ENCODE measurements at regions of chr5 and their contacts with region 1.

Region 1: DNA sequence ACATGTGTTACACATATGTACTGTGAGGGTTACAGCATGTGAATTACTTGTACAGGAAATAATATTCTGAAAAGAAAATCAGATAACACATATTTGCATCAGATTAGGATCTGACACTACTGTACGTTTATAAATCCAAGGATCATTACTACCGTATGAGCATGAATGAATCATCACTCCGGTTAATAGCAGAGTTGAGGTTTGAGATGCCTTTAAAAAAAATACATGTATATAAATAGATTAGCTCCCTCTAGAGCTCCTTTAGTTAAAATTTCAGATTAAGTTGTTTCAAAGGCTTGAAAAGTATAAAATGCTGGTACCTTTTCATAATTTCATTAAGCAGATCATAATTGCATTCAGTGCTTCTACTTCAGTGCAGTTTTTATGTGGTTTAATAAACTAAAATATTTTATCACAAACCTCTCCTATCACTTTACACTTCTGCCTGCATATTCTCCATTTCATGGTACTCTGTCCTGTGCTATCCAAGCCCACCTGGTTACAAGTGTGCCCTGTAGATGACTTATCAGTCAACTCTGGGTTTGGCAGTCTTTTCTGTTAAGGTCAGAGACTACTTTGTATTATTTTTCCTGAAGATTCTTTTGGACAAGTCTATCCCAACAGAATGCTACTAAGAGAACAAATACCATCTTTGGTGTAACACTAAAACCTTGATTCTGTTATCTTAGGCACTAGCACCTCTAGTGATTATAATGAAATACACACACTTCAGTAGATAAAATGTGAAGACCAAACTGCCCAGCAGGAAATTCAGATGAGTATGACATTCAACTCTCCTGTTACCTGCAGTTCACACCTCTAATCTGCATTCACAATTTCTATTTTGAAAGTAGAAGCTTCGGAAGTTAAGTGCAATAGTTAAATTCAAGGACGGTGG is 48.0 kb upstream of the POU5F2 start:
- DNase-seq: no peak
- H3K4me3 ChIP-seq: no peak overlapping the region
- H3K27ac ChIP-seq: no peak overlapping the region
- H3K4me1 ChIP-seq: peaks cover 0 to 4% (median 0%) of the 10 kb centered on the region in 4 donors
- H3K27me3 ChIP-seq: no peaks in the 10 kb centered on the region
- CTCF ChIP-seq: no peak
- EP300 ChIP-seq: no peak
- POLR2A ChIP-seq: no peak

Region 2: GRCh38 chr5:93582677-93583438 is 206.6 kb before region 1 on chr5 and contains the start of gene NR2F1:
- in situ Hi-C with region 1: loop called in 1 of 4 experiments (anchors 25 kb)
- intact Hi-C with region 1: no loop called
- DNase-seq: peak; percentile 55
- H3K4me3 ChIP-seq: peak within 1 kb of the TSS; percentile 19 to 55 (median 50)
- H3K27ac ChIP-seq: peak within 1 kb of the TSS; percentile 53 to 65 (median 54)
- H3K4me1 ChIP-seq: peaks cover 9 to 60% (median 40%) of the 10 kb centered on the region in 4 donors
- H3K27me3 ChIP-seq: peaks cover 94% of the 10 kb centered on the region
- CTCF ChIP-seq: peak in 4 of 5 experiments; percentile 11 to 82 (median 46)
- EP300 ChIP-seq: no peak
- POLR2A ChIP-seq: peak; percentile 27
- total RNA-seq, gene NR2F1: 1.5 to 6.2 (median 3.2) TPM

Region 3: DNA sequence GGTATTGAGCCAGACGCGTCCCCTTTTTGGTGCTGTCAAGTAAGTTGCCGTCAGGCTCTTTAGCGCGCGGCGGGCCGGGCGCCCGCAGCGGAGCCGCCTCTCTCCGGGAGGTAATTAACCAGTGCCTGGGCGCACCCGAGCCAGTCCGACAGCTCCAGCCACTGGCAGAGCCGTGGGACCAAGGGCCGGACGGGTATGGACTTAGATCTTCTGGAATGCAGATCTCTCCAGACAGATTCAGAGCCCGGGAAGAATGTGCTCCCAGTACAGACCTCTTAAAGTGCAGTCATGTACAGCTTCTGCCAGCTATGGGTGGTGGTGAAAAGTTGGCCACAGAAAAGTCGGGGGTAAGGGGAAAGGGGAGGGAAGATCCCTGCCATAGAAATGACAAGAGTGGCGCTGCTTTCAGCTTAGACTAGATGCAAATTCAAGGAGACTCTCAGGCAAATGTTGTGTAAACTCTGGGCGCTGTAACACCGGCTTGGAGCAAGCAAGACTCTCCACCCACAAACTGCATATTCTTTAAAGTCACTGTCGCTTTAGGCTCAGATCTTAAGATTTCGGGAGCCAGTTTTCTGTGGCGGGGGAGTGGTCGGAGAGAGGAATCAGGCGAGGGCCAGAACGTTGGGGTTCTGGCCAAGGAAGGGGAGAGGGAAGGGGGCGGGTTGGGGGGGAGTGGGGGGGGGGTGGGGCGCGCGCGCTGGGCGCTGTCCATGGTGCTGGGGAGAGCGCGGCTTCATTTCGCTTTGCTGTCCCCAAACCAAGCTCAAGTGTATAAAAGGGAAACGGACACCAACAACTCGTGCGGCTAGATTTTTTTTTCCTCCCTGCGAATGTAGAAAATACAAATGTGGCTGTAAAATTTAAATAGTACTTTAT is 177.2 kb before region 1 on chr5:
- in situ Hi-C with region 1: loop called in 3 of 4 experiments (anchors 10 to 25 kb)
- intact Hi-C with region 1: no loop called
- DNase-seq: no peak
- H3K4me3 ChIP-seq: no peak overlapping the region
- H3K27ac ChIP-seq: no peak overlapping the region
- H3K4me1 ChIP-seq: peaks cover 0 to 14% (median 7%) of the 10 kb centered on the region in 4 donors
- H3K27me3 ChIP-seq: peaks cover 88% of the 10 kb centered on the region
- CTCF ChIP-seq: no peak
- EP300 ChIP-seq: no peak
- POLR2A ChIP-seq: no peak

Region 4: GRCh38 chr5:93620487-93621326 is 168.7 kb before region 1 on chr5:
- in situ Hi-C with region 1: loop called in 3 of 4 experiments (anchors 10 to 25 kb)
- intact Hi-C with region 1: no loop called
- DNase-seq: peak; percentile 67
- H3K4me3 ChIP-seq: peak overlapping the region; percentile 41 to 59 (median 57)
- H3K27ac ChIP-seq: peak overlapping the region; percentile 56 to 80 (median 72)
- H3K4me1 ChIP-seq: peaks cover 0 to 14% (median 3%) of the 10 kb centered on the region in 4 donors
- H3K27me3 ChIP-seq: peaks cover 3% of the 10 kb centered on the region
- CTCF ChIP-seq: no peak
- EP300 ChIP-seq: no peak
- POLR2A ChIP-seq: no peak

Region 5: DNA sequence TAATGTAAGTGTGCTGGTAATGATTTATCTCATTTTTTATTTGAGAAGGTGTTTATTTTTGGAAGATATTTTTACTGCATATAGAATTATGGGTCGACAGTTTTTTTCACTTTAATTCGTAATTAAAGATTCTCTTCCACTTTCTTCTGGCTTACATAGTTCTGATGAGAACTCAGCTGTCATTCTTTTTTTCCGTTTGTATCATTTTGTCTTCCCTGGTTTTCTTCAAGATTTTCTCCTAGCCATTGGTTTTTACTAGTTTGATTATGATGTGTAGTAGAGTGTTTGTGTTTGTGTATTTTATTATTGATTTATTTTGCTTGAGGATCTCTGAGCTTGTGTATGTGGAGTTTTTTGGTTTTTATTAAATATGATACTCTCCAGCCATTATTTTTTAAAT is 850.8 kb after region 1 on chr5:
- in situ Hi-C with region 1: no loop called
- intact Hi-C with region 1: no loop called
- DNase-seq: no peak
- H3K4me3 ChIP-seq: no peak overlapping the region
- H3K27ac ChIP-seq: no peak overlapping the region
- H3K4me1 ChIP-seq: no peaks in the 10 kb centered on the region
- H3K27me3 ChIP-seq: no peaks in the 10 kb centered on the region
- CTCF ChIP-seq: no peak
- EP300 ChIP-seq: no peak
- POLR2A ChIP-seq: no peak

Measured in transverse colon (tissue), 4 donors.